Aorta (tissue), 5 donors: ENCODE measurements at regions of chr11 and their contacts with region 1.

Region 1: DNA sequence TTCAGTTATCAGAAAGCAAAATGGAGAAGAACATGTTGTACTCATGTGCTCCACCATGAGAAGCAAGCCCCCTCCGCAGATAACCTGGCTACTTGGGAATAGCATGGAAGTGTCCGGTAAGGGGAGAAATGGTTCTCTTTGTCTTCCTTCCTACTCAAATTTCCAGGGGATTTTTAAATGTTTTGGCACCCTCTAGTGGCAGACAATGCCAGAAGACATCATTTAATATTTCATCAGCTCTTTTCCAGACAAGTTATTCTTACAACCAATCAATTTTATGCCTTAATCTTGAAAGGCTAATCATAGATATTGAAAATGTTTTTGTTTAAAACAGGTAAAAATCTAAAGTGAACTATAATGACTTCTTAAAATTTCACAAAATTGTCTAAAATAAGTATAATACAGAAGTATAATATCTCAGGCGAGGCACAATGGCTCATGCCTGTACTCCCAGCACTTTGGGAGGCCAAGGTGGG is 15.7 kb downstream of the CRTAM start:
- DNase-seq: no peak
- ATAC-seq: peak; percentile 48
- H3K4me3 ChIP-seq: no peak overlapping the region
- H3K27ac ChIP-seq: no peak overlapping the region
- H3K4me1 ChIP-seq: no peaks in the 10 kb centered on the region
- H3K27me3 ChIP-seq: no peaks in the 10 kb centered on the region

Region 2: DNA sequence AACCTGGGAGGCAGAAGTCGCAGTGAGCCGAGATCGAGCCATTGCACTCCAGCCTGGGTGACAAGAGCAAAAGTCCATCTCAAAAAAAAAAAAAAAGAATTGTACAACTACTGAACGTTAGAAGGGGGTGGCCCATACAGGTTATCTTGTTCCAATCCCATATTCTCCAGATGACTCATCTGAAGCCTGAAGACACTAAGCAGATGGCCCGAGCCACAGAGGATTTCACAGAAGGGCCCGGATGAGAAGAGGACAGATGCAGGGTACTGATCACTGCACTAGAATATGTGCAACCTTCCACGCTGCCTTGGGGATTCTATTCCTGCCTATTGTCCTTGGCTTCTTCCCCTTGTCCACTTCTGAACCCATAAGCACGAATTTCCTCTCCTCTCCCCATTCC is 269.3 kb before region 1 on chr11:
- intact Hi-C with region 1: loop called in 1 of 2 experiments (anchors 10 kb)
- DNase-seq: no peak
- ATAC-seq: no peak
- H3K4me3 ChIP-seq: no peak overlapping the region
- H3K27ac ChIP-seq: no peak overlapping the region
- H3K4me1 ChIP-seq: no peaks in the 10 kb centered on the region
- H3K27me3 ChIP-seq: no peaks in the 10 kb centered on the region

Region 3: GRCh38 chr11:122628810-122629555 is 225.0 kb before region 1 on chr11:
- intact Hi-C with region 1: loop called (anchors 2 to 5 kb)
- DNase-seq: peak; percentile 83 to 84
- ATAC-seq: peak; percentile 64
- H3K4me3 ChIP-seq: no peak overlapping the region
- H3K27ac ChIP-seq: no peak overlapping the region
- H3K4me1 ChIP-seq: no peaks in the 10 kb centered on the region
- H3K27me3 ChIP-seq: peaks cover 0 to 1% of the 10 kb centered on the region in 2 donors

Region 4: GRCh38 chr11:122796128-122796717 is 57.8 kb before region 1 on chr11:
- intact Hi-C with region 1: loop called in 1 of 2 experiments (anchors 10 kb)
- DNase-seq: peak in 1 of 2 donors; percentile 78
- ATAC-seq: peak; percentile 60
- H3K4me3 ChIP-seq: no peak overlapping the region
- H3K27ac ChIP-seq: no peak overlapping the region
- H3K4me1 ChIP-seq: no peaks in the 10 kb centered on the region
- H3K27me3 ChIP-seq: no peaks in the 10 kb centered on the region

Region 5: DNA sequence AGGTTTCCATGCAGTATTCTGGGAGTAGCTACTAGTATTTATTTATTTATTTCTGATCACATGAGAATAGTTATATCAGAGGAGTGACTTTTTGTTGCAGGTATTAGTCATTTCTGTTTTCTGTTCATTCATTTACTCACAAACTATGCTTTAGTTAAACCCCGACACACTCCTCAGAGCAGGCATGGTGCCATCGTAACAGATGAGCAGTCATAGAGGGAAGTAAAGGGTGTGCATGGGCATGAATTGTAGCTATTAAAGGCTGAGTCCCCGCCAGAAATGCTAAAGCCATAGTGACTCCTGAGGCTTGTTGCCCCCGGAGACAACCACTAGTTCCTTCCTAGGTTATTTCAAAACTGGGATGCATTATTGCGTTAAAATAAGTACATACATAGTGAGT is 39.1 kb after region 1 on chr11:
- intact Hi-C with region 1: no loop called
- DNase-seq: no peak
- ATAC-seq: no peak
- H3K4me3 ChIP-seq: no peak overlapping the region
- H3K27ac ChIP-seq: no peak overlapping the region
- H3K4me1 ChIP-seq: no peaks in the 10 kb centered on the region
- H3K27me3 ChIP-seq: no peaks in the 10 kb centered on the region

Region 6: GRCh38 chr11:122917311-122917710 is 63.3 kb after region 1 on chr11:
- intact Hi-C with region 1: no loop called
- DNase-seq: no peak
- ATAC-seq: no peak
- H3K4me3 ChIP-seq: no peak overlapping the region
- H3K27ac ChIP-seq: no peak overlapping the region
- H3K4me1 ChIP-seq: no peaks in the 10 kb centered on the region
- H3K27me3 ChIP-seq: no peaks in the 10 kb centered on the region

Region 7: DNA sequence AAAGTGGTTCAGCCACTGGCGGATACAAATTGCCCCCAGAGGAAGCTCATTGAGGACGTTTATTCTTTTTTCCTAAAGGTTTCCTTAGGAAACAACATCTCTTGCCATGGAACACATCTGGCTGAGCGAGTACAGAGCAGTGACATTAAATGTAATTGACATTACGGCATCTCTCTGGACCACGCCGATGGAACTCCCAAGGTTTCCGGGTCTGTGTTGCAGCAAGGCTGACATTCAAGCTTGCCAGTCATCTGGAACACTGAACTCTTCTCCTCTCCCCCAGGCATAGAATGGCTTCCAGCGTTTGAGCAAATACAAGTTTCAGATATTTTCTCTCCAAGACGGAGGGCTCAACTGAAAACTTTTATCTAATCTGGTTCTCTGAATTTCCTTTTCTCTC is 298.9 kb after region 1 on chr11:
- intact Hi-C with region 1: no loop called
- DNase-seq: no peak
- ATAC-seq: no peak
- H3K4me3 ChIP-seq: no peak overlapping the region
- H3K27ac ChIP-seq: no peak overlapping the region
- H3K4me1 ChIP-seq: peaks cover 0 to 1% of the 10 kb centered on the region in 2 donors
- H3K27me3 ChIP-seq: no peaks in the 10 kb centered on the region